Vagina (tissue), 2 donors: ENCODE measurements at regions of chr9 and their contacts with region 1.

Region 1: DNA sequence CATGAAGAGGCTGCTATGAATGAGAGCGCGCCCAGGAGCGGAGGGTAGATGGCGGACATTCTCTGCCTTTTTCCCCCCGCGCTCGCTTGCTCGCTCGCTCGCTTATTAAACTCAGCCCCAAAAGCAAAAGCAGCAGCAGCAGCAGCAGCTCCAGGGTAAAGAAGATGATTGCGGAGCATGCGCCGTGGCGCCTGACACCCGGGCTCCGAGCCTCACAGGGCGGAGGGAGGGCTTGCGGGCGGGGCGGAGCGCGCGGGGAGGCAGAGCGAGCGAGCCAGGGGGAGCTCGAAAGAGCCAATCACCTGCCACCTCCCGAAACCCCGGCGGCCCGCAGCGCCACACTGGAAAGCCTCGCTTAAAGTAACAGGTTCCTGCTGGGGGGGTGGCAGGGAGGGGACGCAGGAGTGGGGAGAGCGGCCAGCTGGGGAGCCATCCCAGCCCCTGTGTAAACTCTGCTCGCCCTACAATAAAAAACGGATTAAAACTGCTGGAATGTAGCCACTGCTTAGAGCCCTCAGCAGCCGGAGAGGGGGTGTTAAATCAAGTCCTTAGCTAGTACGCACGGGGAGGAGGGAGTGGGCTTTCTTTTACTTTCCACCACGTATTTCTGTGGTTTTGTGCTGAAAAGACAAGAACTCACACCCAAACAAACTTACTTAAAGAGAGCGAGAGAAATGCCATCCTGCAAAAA is at the start of gene MLLT3:
- DNase-seq: peak in 1 of 2 donors; percentile 94
- H3K4me3 ChIP-seq: peak within 1 kb of the TSS; percentile 75 to 95
- H3K27ac ChIP-seq: peak within 1 kb of the TSS; percentile 95
- H3K4me1 ChIP-seq: peaks cover 24% of the 10 kb centered on the region
- H3K27me3 ChIP-seq: no peaks in the 10 kb centered on the region
- CTCF ChIP-seq: no peak
- POLR2A ChIP-seq: peak in 1 of 2 donors; percentile 76
- total RNA-seq, gene MLLT3: 8.8 TPM

Region 2: GRCh38 chr9:20684035-20684872 is 61.8 kb after region 1 on chr9 and contains the start of gene FOCAD:
- intact Hi-C with region 1: loop called (anchors 10 kb)
- DNase-seq: peak; percentile 96 to 98
- H3K4me3 ChIP-seq: peak within 1 kb of the TSS; percentile 85 to 91
- H3K27ac ChIP-seq: peak within 1 kb of the TSS; percentile 95
- H3K4me1 ChIP-seq: peaks cover 26% of the 10 kb centered on the region
- H3K27me3 ChIP-seq: no peaks in the 10 kb centered on the region
- CTCF ChIP-seq: no peak
- POLR2A ChIP-seq: peak; percentile 83 to 89
- total RNA-seq, gene FOCAD: 39.8 TPM

Region 3: GRCh38 chr9:20941174-20941690 is 318.8 kb after region 1 on chr9:
- intact Hi-C with region 1: loop called (anchors 10 kb)
- DNase-seq: no peak
- H3K4me3 ChIP-seq: no peak overlapping the region
- H3K27ac ChIP-seq: no peak overlapping the region
- H3K4me1 ChIP-seq: no peaks in the 10 kb centered on the region
- H3K27me3 ChIP-seq: no peaks in the 10 kb centered on the region
- CTCF ChIP-seq: peak; percentile 46 to 89 (median 73)
- POLR2A ChIP-seq: no peak